HEK293 (cell line): ENCODE measurements at regions of chr14 and their contacts with region 1.

Region 1: GRCh38 chr14:105300792-105301533 is at the start of gene BRF1:
- H3K4me3 ChIP-seq: peak within 1 kb of the TSS; percentile 88
- H3K27ac ChIP-seq: peak within 1 kb of the TSS; percentile 97
- H3K4me1 ChIP-seq: no peaks in the 10 kb centered on the region
- CTCF ChIP-seq: no peak

Region 2: DNA sequence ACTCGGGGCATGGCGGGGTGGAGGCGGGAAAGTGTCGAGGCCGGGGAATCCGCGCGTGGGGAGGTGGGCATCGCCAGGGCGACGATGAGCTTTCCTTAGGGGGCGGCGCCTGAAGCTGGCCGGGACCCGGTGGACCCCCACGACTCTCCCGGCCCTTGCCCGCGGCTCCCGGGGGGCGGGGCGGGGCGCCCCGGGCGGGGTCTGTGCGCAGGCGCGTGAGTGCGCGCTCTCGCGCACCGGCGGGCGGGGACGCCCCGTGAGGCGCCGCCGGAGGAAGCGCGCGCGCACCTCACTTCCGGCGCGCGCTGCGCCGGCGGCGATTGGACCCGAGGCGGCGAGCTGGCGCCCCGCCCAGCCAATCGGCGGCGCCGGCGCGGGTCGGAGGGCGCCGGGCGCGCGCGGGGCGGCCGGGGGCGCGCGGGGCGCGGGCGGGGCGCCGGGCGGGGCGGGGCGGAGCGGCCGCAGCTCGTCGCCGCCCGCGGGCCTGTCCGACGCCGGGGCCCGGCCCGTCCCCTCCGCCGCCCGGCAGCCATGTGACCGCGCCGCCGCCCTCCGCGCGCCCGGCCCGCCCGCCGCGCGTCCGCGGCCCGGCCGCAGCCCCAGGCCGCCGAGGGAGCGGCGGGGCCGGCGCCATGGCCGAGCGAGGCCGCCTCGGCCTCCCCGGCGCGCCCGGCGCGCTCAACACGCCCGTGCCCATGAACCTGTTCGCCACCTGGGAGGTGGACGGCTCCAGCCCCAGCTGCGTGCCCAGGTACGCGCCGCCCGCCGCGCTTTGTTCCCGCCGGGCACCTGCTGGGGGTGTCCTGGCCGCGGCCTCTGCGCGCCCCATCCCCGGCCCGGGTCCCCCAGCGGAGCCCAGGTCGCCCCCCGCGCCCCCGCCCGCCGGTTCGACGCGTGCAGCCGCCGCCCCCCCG is 13.6 kb after region 1 on chr14 and contains the start of gene PACS2:
- CTCF ChIA-PET with region 1: no interaction called
- POLR2A ChIA-PET with region 1: interaction called, 36 read pairs
- H3K4me3 ChIP-seq: peak within 1 kb of the TSS; percentile 69
- H3K27ac ChIP-seq: peak within 1 kb of the TSS; percentile 46; the same call in 1 of the 2 replicates
- H3K4me1 ChIP-seq: peaks cover 7% of the 10 kb centered on the region
- CTCF ChIP-seq: no peak